Cardiac septum (tissue), 1 donor: ENCODE measurements at regions of chr2 and their contacts with region 1.

Region 1: GRCh38 chr2:71331581-71332434 is at the start of gene ZNF638:
- DNase-seq: peak; percentile 96
- total RNA-seq, gene ZNF638: 79.5 TPM

Region 2: DNA sequence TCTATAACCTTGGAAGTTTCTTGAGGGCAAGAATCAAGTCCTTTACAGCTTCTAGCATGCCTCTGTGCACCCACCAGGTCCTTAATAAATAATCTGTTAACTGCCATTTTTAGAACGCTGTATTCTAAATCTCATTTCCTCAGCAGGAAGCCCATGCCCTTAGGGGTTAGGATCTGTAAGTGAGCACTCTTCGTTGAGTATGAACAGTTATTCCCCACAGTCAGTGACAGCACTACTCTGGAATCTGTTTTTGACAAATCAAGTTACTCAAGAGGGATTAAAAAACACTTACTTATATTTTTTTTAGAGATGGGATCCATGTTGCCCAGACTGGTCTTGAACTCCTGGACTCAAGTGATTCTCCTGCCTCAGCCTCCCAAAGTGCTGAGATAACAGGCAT is 119.5 kb before region 1 on chr2:
- intact Hi-C with region 1: no loop called
- DNase-seq: no peak

Region 3: GRCh38 chr2:71299507-71299906 is 32.3 kb before region 1 on chr2:
- intact Hi-C with region 1: loop called (anchors 5 kb)
- DNase-seq: no peak